Right lobe of liver (tissue), 6 donors: ENCODE measurements at regions of chr17 and their contacts with region 1.

Region 1: GRCh38 chr17:15260376-15261257 is 4.5 kb downstream of the PMP22 start:
- DNase-seq: peak; percentile 81 to 88 (median 81)
- ATAC-seq: peak; percentile 81 to 89 (median 85)
- H3K4me3 ChIP-seq: peak overlapping the region; percentile 45 to 54 (median 50)
- H3K27ac ChIP-seq: peak overlapping the region; percentile 45 to 83 (median 58)
- H3K4me1 ChIP-seq: peaks cover 0 to 7% (median 0%) of the 10 kb centered on the region in 4 donors
- H3K27me3 ChIP-seq: no peaks in the 10 kb centered on the region
- CTCF ChIP-seq: peak; percentile 90 to 95 (median 92)
- POLR2A ChIP-seq: peak; percentile 38

Region 2: DNA sequence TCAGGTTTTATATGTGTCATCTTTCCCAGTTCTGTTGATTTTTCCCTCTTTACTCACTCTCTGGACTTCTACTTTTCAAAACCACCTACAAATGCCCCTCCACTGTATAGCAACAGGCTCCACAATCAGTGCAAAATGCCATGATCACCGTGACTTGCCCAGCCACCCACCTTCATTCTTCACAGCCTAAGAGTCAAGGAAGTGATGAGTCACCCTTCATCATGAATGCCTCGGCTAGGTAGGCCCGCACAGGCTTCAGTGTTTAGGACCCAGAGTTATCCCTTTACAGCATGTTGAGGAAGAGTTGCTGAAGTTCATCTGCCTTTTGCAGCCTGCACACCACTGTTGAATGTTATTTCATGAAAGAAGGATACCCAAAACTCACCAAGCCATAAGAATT is 154.1 kb before region 1 on chr17:
- intact Hi-C with region 1: no loop called
- DNase-seq: no peak
- ATAC-seq: no peak
- H3K4me3 ChIP-seq: no peak overlapping the region
- H3K27ac ChIP-seq: no peak overlapping the region
- H3K4me1 ChIP-seq: no peaks in the 10 kb centered on the region
- H3K27me3 ChIP-seq: no peaks in the 10 kb centered on the region
- CTCF ChIP-seq: no peak
- POLR2A ChIP-seq: no peak

Region 3: GRCh38 chr17:15332338-15332737 is 71.7 kb after region 1 on chr17:
- intact Hi-C with region 1: no loop called
- DNase-seq: no peak
- ATAC-seq: no peak
- H3K4me3 ChIP-seq: no peak overlapping the region
- H3K27ac ChIP-seq: no peak overlapping the region
- H3K4me1 ChIP-seq: no peaks in the 10 kb centered on the region
- H3K27me3 ChIP-seq: no peaks in the 10 kb centered on the region
- CTCF ChIP-seq: no peak
- POLR2A ChIP-seq: no peak

Region 4: DNA sequence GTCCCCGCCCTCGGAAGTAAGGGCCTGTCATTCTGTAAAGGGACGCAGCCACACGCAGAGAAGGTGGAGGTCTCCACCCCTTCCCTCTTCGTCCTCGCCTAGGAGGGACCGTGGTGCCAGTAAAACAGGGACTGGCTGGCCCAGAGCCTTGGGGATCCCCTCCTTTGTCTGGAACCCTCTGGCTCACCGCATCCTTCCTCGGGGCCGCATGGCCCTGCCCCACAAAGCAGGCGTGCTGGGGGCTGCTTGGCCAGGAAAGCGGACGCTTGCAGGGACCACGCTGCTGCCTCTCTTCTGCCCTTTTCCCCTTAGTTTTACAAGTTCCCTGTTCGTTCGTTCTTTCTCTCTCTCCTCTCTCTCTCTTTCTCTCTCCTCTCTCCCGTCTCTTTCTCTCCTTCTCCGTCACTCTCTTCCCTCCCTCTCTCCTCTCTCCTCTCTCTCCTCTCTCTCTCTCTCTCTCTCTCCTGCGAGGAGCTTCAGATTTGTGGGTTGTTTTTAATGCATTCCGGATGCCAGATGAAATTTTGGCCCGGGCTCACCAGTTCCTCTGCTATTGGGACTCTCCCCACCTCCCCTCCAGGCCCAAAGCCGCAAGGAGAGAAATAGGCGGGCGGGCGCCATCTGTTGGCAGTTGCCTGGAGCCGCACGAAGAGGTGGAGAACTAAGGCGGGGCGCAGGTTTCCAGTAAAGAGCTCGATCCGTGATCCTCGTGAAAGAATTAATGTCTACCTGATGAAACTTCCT is 241.9 kb after region 1 on chr17:
- intact Hi-C with region 1: loop called in 1 of 2 experiments (anchors 10 kb)
- DNase-seq: peak; percentile 79 to 81 (median 81)
- ATAC-seq: peak; percentile 89 to 94 (median 92)
- H3K4me3 ChIP-seq: no peak overlapping the region
- H3K27ac ChIP-seq: no peak overlapping the region
- H3K4me1 ChIP-seq: no peaks in the 10 kb centered on the region
- H3K27me3 ChIP-seq: no peaks in the 10 kb centered on the region
- CTCF ChIP-seq: peak; percentile 75 to 79 (median 78)
- POLR2A ChIP-seq: no peak